ENCODE measurements at regions of chr11 and their contacts with region 1.

Region 1: DNA sequence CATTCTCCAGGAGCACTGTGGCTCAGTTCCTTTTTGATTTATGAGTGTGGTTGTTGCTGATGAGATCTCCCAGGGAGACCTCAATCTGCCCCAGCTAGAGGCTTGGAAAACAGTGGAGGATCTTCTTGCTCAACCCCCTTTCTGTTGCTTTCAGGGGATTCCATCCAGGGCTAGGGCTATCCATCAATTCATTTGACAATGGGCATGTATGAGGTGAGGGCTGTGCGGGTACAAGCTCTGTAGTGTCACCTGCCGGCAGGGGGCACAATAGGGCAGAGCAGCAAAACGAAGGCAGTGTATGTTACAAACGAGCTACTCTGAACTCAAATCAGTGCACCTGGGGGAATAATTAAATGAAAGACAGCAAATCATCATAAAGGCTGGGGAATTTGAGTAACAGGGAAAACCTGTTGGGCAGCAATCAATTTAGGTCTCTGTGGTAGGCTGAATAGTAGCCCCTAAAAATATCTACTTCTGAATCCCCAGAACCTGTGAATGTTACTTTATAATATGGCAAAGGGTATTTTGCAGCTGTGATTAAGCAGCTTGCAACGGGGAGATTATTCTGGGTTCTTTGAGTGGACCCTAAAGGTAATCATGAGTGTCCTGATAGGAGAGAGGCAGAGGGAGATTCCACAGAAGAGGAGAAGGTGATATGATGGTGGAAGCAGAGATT is 170.3 kb upstream of the ZBED5 start:
- DNase-seq: peak; percentile 74
- H3K4me3 Mint-ChIP-seq: no peak overlapping the region
- H3K27ac Mint-ChIP-seq: no peak overlapping the region
- H3K4me1 Mint-ChIP-seq: peaks cover 16% of the 10 kb centered on the region
- H3K27me3 Mint-ChIP-seq: no peaks in the 10 kb centered on the region
- CTCF ChIP-seq: peak; percentile 86

Region 2: GRCh38 chr11:10770626-10771254 is 257.4 kb before region 1 on chr11:
- CTCF ChIA-PET with region 1: interaction called, 41 read pairs
- POLR2A ChIA-PET with region 1: interaction called, 4 read pairs
- intact Hi-C with region 1: no loop called
- DNase-seq: peak; percentile 58
- H3K4me3 Mint-ChIP-seq: no peak overlapping the region
- H3K27ac Mint-ChIP-seq: no peak overlapping the region
- H3K4me1 Mint-ChIP-seq: no peaks in the 10 kb centered on the region
- H3K27me3 Mint-ChIP-seq: no peaks in the 10 kb centered on the region
- CTCF ChIP-seq: peak; percentile 53

Region 3: DNA sequence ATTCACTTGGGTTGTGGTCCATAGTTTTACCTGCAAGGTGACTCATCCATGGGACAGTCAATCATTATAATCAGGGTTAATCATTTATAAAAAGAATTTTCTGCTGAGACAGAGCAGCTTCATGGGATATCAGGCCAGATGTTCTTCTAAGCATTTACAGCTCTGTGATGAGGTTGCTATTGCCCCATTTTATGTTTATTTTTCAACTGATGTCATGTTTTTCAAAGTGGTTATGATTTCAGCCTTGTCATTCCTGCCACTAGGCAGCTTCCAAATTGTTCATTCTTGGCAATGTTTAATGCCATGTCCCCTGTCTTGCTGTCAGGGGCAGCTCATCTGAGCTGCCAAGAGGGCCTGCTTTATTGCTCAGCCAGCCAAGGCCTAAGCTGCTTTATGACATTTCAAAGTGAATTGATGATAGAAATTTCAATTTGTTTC is 134.4 kb before region 1 on chr11:
- CTCF ChIA-PET with region 1: no interaction called
- POLR2A ChIA-PET with region 1: no interaction called
- intact Hi-C with region 1: no loop called
- DNase-seq: peak; percentile 24
- H3K4me3 Mint-ChIP-seq: no peak overlapping the region
- H3K27ac Mint-ChIP-seq: peak overlapping the region; percentile 25
- H3K4me1 Mint-ChIP-seq: peaks cover 30% of the 10 kb centered on the region
- H3K27me3 Mint-ChIP-seq: no peaks in the 10 kb centered on the region
- CTCF ChIP-seq: no peak

Region 4: DNA sequence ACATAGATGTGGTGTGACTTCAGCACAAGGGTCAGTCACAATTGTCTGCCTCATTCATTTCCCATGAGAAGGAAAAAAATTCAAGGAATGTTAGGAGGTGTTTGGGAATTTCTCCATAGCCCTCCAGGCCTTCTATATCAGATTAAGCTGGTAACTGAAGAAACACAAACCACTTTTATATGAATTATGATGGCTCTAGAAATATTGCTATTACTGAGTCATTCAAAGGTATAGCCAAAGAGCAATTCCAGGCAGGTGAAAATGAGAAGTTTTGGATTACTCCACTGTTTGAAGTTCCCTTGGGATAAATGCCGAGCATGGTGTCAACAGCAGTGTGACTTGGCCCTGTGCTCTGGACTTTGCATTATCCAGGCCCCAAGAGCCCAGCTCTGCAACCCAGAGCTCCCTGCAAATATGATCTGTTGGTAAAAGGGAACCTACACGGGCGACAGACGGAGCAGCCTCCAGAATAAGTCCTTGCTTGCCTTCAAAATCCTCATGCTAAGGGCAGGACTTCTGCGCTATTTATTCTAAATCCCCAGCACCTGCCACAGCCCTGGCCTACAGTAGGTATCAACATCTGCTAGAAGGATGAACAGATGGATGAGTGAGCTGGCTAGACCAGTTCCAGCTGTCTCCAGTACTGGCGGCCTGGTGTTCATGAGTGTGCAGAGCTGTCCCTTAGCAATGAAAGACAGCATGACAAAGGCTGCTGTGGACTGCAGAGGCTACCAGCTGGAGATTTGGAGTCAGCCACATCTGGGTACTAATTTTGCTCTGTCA is 102.8 kb before region 1 on chr11:
- CTCF ChIA-PET with region 1: interaction called, 10 read pairs
- POLR2A ChIA-PET with region 1: no interaction called
- intact Hi-C with region 1: no loop called
- DNase-seq: no peak
- H3K4me3 Mint-ChIP-seq: no peak overlapping the region
- H3K27ac Mint-ChIP-seq: no peak overlapping the region
- H3K4me1 Mint-ChIP-seq: no peaks in the 10 kb centered on the region
- H3K27me3 Mint-ChIP-seq: no peaks in the 10 kb centered on the region
- CTCF ChIP-seq: no peak

Region 5: DNA sequence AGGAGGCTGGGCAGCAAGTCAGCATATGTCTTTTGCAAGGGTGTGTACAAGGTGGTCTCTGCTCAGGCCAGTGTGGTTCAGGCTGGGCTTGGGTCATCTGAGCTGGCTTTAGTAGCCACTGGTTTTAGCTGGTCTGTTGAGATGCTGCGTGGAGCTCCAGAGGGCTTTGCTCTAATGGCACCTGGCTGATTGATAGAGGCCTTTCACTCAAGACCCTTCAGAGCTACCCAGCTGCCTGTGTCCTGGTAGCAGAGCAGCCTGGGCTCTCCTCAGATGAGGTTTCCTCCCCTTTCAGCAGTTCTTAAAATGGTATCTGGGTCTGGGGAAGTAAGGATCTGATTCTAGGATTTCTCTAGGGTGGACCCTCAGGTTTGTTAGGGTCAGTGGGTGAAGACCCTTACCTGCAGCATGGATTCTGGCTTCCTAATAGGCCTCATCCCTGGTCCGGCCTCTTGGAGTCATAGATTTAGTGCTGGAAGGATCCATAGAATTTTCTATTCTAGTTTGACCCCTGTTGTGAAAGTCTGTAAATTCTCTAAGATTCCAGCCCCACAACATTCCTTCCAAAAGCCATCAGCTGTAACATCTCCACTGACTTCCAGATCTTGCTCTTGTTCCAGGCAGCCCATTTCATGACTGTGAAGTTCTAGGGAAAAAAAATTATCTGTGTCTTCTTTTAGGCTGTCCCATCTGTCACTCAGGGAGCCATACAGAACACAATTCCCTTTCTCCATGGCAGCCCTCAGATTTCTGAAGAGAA is 19.9 kb after region 1 on chr11:
- CTCF ChIA-PET with region 1: interaction called, 18 read pairs
- POLR2A ChIA-PET with region 1: no interaction called
- intact Hi-C with region 1: no loop called
- DNase-seq: no peak
- H3K4me3 Mint-ChIP-seq: no peak overlapping the region
- H3K27ac Mint-ChIP-seq: no peak overlapping the region
- H3K4me1 Mint-ChIP-seq: no peaks in the 10 kb centered on the region
- H3K27me3 Mint-ChIP-seq: no peaks in the 10 kb centered on the region
- CTCF ChIP-seq: no peak

Region 6: GRCh38 chr11:11265994-11266606 is 237.9 kb after region 1 on chr11:
- CTCF ChIA-PET with region 1: interaction called, 63 read pairs
- POLR2A ChIA-PET with region 1: interaction called, 3 read pairs
- intact Hi-C with region 1: loop called (anchors 1 kb)
- DNase-seq: peak; percentile 62
- H3K4me3 Mint-ChIP-seq: no peak overlapping the region
- H3K27ac Mint-ChIP-seq: no peak overlapping the region
- H3K4me1 Mint-ChIP-seq: peaks cover 9% of the 10 kb centered on the region
- H3K27me3 Mint-ChIP-seq: no peaks in the 10 kb centered on the region
- CTCF ChIP-seq: peak; percentile 84

Region 7: DNA sequence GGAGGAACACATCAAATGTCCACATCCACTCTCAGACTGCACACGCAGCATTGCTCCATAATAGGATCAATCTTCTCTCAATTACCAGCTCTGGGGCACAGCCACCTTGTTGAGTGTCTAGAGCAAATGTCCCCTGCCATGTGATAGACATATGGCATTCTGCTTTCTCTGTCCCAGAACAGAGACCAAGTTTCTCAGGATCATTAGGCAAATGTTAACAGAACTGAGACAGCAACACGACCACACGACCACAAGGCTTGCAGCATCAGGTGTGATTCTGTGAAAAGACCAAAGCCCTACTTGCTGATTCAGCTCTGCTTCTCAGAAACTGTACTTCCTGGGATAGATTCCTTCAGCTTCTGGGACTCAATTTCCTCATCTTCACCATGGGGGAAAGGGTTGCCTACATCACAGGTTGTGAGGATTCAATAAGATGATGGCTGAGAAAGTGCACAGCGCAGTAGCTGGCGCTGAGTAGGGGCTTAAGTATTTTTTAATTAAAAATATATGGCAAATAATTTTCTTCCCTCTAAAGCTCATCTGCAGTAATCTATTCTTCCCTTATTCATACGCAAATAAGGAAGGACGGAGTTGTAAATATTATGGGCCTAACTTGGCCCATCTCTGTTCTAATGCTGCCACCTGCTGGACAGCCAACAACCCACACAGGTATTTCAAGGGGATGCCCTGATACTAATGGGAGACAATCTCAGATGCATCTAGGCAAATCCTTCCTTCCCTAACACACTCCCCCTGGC is 759.3 kb after region 1 on chr11:
- CTCF ChIA-PET with region 1: interaction called, 103 read pairs
- POLR2A ChIA-PET with region 1: interaction called, 16 read pairs
- intact Hi-C with region 1: loop called (anchors 1 kb)
- DNase-seq: peak; percentile 81
- H3K4me3 Mint-ChIP-seq: no peak overlapping the region
- H3K27ac Mint-ChIP-seq: no peak overlapping the region
- H3K4me1 Mint-ChIP-seq: peaks cover 26% of the 10 kb centered on the region
- H3K27me3 Mint-ChIP-seq: no peaks in the 10 kb centered on the region
- CTCF ChIP-seq: peak; percentile 87

Measured in MCF 10A (cell line).